ENCODE measurements at regions of chr19 and their contacts with region 1.

Region 1: GRCh38 chr19:17075035-17075863 is at the starts of genes HAUS8 and MYO9B:
- DNase-seq: peak; percentile 99
- H3K4me3 ChIP-seq: peak within 1 kb of the TSS; percentile 59 to 82 (median 72)
- H3K27ac ChIP-seq: peak within 1 kb of the TSS; percentile 84 to 91 (median 90)
- H3K4me1 ChIP-seq: peaks cover 42 to 63% (median 55%) of the 10 kb centered on the region in 4 donors
- H3K27me3 ChIP-seq: no peaks in the 10 kb centered on the region
- CTCF ChIP-seq: no peak
- EP300 ChIP-seq: no peak
- POLR2A ChIP-seq: no peak
- total RNA-seq, gene HAUS8: 3.3 to 6.6 (median 4.6) TPM
- total RNA-seq, gene MYO9B: 52.6 to 73.3 (median 57.7) TPM

Region 2: DNA sequence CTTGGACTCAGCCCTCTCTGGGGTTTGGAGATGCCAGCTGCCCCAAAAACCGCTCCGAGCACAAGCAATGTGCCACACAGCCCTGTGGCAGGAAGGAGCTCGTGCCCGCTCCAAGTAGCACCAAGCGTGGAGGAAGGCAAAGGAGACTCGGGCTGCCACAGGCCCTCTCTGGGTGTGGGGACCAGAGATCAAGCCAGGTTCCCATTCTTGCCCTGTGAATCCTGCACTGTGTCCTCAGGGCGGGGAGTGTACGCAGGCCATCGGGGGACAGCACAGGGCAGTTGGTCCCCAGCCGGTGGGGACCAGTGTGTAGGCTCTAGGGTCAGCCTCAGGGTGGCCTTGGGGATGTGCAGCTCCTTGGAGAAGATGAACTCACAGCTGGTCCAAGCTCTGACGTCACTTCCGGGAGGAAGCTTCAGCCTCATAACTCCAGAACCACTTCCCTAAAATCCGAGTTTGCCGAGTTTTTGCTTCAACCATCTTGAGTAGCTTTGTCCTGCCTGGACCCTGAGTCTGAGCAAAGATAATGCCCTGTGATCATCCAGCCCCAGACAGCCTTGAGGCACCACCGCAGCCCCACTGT is 39.3 kb before region 1 on chr19:
- intact Hi-C with region 1: no loop called
- DNase-seq: no peak
- H3K4me3 ChIP-seq: no peak overlapping the region
- H3K27ac ChIP-seq: no peak overlapping the region
- H3K4me1 ChIP-seq: no peaks in the 10 kb centered on the region
- H3K27me3 ChIP-seq: peaks cover 0 to 58% (median 0%) of the 10 kb centered on the region in 4 donors
- CTCF ChIP-seq: no peak
- EP300 ChIP-seq: no peak
- POLR2A ChIP-seq: no peak

Region 3: DNA sequence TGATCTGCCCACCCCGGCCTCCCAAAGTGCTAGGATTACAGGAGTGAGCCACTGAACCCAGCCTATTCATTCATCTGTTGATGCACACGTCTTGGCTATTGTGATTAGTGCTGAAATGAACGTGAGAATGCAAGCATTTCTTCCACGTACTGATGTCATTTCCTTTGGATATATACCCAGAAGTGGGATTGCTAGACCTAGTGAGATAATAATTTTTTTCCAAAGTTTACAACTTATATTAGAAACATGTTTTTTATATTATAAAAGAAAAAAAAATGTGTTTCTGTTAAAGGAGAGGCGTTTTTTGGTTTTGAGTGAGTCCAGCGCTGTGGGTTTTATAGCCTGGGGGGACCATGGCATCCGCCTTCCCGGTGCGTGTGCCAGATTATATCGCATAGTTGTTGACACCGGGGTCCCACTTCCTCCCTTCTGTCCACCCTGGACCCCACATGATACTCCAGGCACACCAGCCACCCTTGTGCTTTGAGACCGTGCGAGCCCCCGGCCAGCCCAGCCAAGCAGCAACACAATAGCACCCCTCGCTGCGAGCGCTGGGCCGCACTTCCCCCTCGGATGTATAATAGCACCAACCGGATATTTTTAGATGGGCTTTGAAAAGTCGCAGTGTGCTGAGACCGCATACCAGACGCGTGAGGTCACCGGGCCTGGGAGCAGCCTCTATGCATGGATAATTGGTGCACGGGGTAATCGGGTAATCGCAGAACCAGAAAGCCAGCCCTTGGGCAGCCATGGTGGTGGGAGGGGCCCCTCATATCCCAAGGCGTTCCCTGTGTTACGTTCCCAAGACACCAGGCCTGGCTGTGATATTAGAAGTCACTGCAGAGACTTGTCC is 60.0 kb after region 1 on chr19:
- intact Hi-C with region 1: loop called (anchors 5 kb)
- DNase-seq: peak; percentile 97
- H3K4me3 ChIP-seq: peak overlapping the region; percentile 29 to 42 (median 40)
- H3K27ac ChIP-seq: peak overlapping the region; percentile 88 to 93 (median 90)
- H3K4me1 ChIP-seq: peaks cover 40 to 47% (median 44%) of the 10 kb centered on the region in 4 donors
- H3K27me3 ChIP-seq: no peaks in the 10 kb centered on the region
- CTCF ChIP-seq: peak; percentile 45 to 61 (median 47)
- EP300 ChIP-seq: no peak
- POLR2A ChIP-seq: no peak

Region 4: DNA sequence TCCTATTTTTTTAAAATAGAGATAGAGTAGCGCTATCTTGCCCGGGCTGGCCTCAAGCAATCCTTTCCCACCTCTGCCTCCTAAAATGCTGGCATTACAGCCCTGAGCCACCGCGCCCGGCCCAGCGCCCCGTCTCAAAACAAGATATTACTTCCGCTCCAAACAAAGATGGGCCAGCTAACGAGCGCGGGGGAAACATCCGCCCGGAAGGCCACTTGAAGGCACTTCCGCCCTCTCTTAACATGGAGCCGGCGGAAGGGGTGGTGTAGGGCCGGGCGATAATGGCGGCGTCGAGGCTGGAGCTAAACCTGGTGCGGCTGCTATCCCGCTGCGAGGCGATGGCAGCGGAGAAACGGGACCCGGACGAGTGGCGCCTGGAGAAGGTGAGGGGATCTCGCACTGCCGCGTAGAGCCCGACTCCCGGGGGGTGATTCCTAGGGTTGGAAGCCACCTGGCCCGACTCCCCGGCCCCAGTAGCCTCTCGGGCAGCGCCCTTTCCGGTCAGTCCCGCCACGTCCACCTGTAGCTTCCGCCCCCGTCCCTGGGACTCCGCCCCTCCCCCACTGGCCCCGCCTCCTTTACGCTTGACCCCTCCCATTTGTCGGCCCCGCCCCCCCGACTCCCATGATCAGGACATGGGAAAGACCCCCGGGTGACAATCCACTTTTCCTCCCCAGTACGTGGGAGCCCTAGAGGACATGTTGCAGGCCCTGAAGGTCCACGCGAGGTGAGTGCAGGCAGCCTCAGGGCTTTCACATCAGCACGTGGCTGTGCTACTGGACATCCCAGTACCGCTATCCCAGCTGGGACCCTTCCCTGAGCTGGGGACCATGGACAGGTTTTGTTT is 140.1 kb after region 1 on chr19 and contains the start of gene USE1:
- intact Hi-C with region 1: loop called (anchors 10 kb)
- DNase-seq: peak; percentile 97
- H3K4me3 ChIP-seq: peak within 1 kb of the TSS; percentile 61 to 91 (median 72)
- H3K27ac ChIP-seq: peak within 1 kb of the TSS; percentile 83 to 95 (median 90)
- H3K4me1 ChIP-seq: peaks cover 14 to 26% (median 23%) of the 10 kb centered on the region in 4 donors
- H3K27me3 ChIP-seq: no peaks in the 10 kb centered on the region
- CTCF ChIP-seq: no peak
- EP300 ChIP-seq: no peak
- POLR2A ChIP-seq: peak; percentile 12
- total RNA-seq, gene USE1: 20.7 to 26.2 (median 21.3) TPM